Posterior vena cava (tissue), 2 donors: ENCODE measurements at regions of chr11 and their contacts with region 1.

Region 1: GRCh38 chr11:126355324-126355925 is at the start of gene ST3GAL4:
- DNase-seq: peak; percentile 95
- total RNA-seq, gene ST3GAL4: 36.8 to 44.6 TPM

Region 2: GRCh38 chr11:126186708-126187529 is 168.5 kb before region 1 on chr11:
- intact Hi-C with region 1: no loop called
- DNase-seq: no peak

Region 3: DNA sequence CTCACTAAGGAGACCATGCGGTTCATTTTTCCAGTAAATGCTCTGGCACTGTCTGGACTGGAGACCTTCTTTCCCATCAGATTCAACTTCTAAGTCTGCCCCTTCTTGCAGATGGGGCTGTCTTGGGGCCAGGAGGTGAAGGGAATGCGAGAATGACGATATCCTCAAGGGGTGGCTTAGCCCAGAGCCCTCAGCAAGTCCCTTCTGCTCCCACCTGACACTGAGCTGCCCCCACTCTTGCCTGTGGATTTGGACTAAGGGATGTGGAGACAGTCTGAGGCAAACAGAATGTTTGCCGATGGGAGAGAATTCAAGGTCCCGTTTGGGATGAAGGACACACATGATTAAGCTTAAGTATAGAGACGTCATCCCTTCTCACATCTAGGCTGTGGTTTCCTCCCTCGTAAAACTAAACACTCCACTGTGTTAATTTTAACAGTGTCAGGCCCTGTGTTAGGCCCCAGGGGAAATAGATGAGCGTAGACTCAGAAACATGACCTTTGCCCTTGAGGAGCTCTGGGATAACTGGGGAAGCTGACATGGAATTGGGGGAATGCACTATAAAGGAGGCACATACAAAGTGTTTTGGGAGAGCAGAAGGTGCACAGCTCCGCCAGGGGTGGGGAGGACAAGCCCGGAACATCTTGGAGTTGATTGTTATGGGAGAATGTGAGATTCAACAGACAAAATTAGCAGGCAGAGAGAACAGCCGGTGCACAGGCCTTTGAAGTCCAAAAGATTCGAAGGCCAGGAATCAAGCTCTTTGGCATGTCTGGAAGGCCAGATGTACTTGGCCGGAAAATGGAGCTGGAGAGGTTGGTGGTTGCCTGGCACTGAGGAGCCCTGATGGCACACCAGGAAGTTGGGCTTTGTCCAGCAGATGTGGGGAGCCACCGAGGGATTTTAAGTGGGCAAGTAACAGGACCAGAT is 71.7 kb after region 1 on chr11:
- intact Hi-C with region 1: loop called in 1 of 2 experiments (anchors 5 kb)
- DNase-seq: no peak